Caco-2 (cell line): ENCODE measurements at regions of chr6 and their contacts with region 1.

Region 1: DNA sequence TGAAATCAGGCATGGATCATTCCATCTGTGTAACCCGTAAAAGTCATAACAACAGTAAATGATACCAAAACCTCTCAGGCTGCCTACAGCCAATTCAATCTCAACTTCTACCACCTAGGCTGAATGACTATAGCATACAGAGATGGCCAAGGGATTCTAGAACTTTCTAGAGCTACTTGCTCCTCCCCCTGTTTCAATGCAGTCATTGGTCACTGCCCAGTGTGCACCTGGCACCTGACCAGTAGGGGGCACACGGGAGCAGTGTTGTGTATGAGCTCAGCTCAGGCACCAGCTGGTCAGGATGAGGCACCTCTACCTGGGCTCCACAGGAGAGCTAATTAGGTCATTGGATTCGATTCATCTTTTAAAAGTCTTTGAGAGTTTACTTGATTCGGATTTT is 86.2 kb downstream of the PLEKHG1 start:
- DNase-seq: peak; percentile 77 to 85
- H3K4me3 ChIP-seq: no peak overlapping the region
- H3K4me3 Mint-ChIP-seq: peak overlapping the region; percentile 75
- H3K27ac Mint-ChIP-seq: peak overlapping the region; percentile 79
- H3K4me1 ChIP-seq: peaks cover 31% of the 10 kb centered on the region
- H3K4me1 Mint-ChIP-seq: peaks cover 20% of the 10 kb centered on the region
- H3K27me3 ChIP-seq: no peaks in the 10 kb centered on the region
- H3K27me3 Mint-ChIP-seq: no peaks in the 10 kb centered on the region
- CTCF ChIP-seq: peak; percentile 68 to 87

Region 2: DNA sequence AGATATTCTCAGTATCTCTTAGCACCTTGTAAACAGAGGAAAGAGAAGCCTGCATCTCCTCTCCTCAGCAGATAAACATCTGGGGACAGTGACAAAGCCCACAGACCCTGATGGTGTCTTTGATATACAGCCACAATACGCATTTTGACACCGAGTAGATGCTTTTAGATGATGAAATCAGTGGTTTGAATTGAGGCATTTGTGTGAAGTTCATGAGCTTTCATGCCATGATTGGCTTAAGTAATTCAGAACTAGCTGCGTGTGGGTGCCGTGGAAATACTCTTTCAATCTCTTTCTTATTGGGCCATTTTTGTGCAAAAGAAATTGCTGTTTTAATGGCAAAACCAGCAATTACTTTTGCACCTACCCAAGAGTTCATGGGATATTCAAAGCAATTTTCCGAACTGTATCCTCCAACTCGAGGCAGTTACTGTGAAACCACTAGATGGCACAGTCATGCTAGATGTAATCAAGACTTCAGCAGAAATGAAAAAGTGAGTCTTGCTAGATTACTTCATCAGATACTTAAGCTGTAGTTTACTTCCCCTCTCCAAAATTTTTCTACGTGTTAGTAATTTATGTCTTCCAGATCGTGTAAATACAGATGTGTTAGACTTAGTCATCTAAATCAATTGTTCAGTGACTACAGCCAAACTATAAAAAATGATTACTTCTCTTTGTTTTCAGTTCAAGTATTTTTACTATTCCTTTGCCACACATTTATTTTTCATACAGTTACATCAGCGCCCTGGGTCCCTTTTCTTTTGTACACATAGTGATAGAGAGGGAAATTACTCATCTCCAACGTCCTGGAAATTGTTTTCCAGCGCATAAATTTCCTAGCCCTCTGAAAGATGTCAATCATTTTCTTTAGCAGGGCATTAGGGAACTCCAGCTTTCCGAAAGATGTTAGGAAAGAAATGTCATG is 267.7 kb before region 1 on chr6:
- CTCF ChIA-PET with region 1: interaction called, 26 read pairs
- POLR2A ChIA-PET with region 1: no interaction called
- intact Hi-C with region 1: loop called (anchors 1 kb)
- DNase-seq: peak in 1 of 2 experiments; percentile 61
- H3K4me3 ChIP-seq: peak overlapping the region; percentile 55
- H3K4me3 Mint-ChIP-seq: peak overlapping the region; percentile 86
- H3K27ac Mint-ChIP-seq: peak overlapping the region; percentile 95
- H3K4me1 ChIP-seq: no peaks in the 10 kb centered on the region; the same call in 1 of the 2 replicates
- H3K4me1 Mint-ChIP-seq: peaks cover 20% of the 10 kb centered on the region
- H3K27me3 ChIP-seq: no peaks in the 10 kb centered on the region
- H3K27me3 Mint-ChIP-seq: peaks cover 2% of the 10 kb centered on the region
- CTCF ChIP-seq: peak; percentile 70 to 84

Region 3: DNA sequence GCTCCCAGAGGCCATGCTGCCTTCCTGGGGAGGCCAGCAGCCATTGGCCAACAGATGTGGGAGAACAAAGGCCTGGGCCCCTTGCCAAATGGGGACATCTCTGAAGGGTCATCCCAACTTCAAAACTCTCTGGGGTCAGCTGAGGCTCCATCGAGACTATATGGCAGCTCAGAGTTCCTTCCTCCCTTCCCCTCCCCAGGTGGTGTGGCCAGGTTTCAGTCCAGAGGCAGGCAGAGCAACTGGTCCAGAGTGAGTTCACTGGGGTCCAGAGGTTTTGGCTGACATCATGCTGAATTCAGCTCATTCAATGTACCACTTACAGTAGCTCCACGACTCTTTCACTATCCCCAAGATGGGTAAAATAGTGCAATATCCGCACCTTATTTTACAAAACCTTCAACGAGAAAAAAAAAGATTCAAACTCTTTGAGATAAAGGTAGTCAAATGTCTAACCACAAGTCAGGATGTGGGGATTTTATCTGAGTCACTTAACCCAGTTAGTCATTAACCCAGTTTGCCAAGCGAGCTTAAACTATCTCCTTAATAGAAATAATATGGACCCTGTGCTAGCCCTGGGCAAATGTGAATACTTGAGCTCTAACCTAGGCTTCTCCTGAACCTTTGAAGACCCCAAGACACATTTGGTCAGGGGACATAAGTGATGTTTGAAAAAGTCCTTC is 194.6 kb before region 1 on chr6:
- CTCF ChIA-PET with region 1: no interaction called
- POLR2A ChIA-PET with region 1: no interaction called
- intact Hi-C with region 1: no loop called
- DNase-seq: no peak
- H3K4me3 ChIP-seq: no peak overlapping the region
- H3K4me3 Mint-ChIP-seq: no peak overlapping the region
- H3K27ac Mint-ChIP-seq: no peak overlapping the region
- H3K4me1 ChIP-seq: peaks cover 22% of the 10 kb centered on the region
- H3K4me1 Mint-ChIP-seq: no peaks in the 10 kb centered on the region
- H3K27me3 ChIP-seq: no peaks in the 10 kb centered on the region
- H3K27me3 Mint-ChIP-seq: no peaks in the 10 kb centered on the region
- CTCF ChIP-seq: no peak

Region 4: GRCh38 chr6:150636808-150637207 is 49.1 kb before region 1 on chr6:
- CTCF ChIA-PET with region 1: no interaction called
- POLR2A ChIA-PET with region 1: no interaction called
- intact Hi-C with region 1: loop called (anchors 2 kb)
- DNase-seq: no peak
- H3K4me3 ChIP-seq: no peak overlapping the region
- H3K4me3 Mint-ChIP-seq: no peak overlapping the region
- H3K27ac Mint-ChIP-seq: peak overlapping the region; percentile 55
- H3K4me1 ChIP-seq: peaks cover 84% of the 10 kb centered on the region
- H3K4me1 Mint-ChIP-seq: peaks cover 73% of the 10 kb centered on the region
- H3K27me3 ChIP-seq: no peaks in the 10 kb centered on the region
- H3K27me3 Mint-ChIP-seq: no peaks in the 10 kb centered on the region
- CTCF ChIP-seq: no peak

Region 5: DNA sequence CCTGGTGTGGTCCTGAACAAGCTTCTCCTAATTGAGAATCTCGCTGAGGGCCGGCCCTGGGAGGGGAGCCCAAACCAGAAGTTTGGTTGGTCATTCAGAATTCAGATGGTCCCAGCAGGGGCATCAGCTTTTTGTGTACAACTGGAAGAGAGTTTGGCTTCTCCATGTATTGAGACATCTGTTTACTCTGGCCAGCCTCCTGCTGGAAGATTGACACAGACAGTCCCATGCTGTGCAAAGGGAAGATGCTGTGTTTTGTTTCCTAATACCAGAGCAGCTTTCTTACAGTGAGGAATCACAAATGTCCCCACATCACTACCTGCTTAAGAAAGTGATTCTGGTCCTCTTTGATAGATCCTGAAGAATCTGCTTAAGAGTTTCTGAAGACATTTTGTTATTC is 11.7 kb after region 1 on chr6:
- CTCF ChIA-PET with region 1: interaction called, 16 read pairs
- POLR2A ChIA-PET with region 1: interaction called, 10 read pairs
- intact Hi-C with region 1: no loop called
- DNase-seq: peak in 1 of 2 experiments; percentile 30
- H3K4me3 ChIP-seq: no peak overlapping the region
- H3K4me3 Mint-ChIP-seq: no peak overlapping the region
- H3K27ac Mint-ChIP-seq: no peak overlapping the region
- H3K4me1 ChIP-seq: peaks cover 41% of the 10 kb centered on the region
- H3K4me1 Mint-ChIP-seq: peaks cover 36% of the 10 kb centered on the region
- H3K27me3 ChIP-seq: no peaks in the 10 kb centered on the region
- H3K27me3 Mint-ChIP-seq: no peaks in the 10 kb centered on the region
- CTCF ChIP-seq: no peak

Region 6: DNA sequence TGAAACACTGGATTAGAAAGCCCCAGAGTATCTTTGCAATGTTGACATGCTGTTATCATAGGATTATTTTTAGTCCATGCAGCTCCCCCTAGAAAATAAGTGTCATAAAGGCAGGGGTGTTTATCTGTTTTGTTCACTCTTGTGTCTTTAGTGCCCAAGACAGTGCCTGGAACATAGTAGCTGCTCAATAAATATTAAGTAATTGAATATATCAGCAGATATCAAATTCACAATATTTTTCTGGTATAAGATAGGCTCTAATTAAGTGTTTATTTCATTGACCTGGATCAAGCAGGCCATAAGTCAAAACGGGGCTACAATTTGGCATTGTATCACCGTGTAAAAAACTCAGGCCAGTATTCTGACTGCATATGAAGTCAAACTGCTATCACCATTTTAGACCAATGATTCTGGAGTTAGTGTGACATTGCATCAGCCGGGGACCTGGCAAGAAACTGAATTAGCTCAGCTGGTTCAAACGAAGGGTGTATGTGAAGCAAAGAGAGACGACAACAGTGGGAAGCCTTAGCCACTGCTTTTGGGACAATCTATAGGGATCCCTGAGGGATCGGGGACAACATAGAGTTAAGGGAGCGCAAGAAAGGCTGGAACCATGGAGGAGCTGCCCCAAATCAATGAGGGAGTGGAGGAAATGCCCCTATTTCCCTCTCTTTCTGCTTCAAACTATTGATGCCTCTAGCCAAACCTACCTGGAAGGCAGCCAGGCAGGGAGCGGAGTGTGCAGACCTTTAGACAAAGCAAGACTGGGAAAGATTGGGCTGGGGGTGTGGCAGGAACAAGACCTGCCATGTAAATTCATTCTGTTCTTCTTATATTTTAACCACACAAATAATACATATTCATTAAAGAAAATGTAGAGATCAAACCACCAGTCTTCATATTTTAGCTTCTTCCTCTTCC is 26.0 kb after region 1 on chr6:
- CTCF ChIA-PET with region 1: no interaction called
- POLR2A ChIA-PET with region 1: no interaction called
- intact Hi-C with region 1: no loop called
- DNase-seq: no peak
- H3K4me3 ChIP-seq: no peak overlapping the region
- H3K4me3 Mint-ChIP-seq: no peak overlapping the region
- H3K27ac Mint-ChIP-seq: peak overlapping the region; percentile 26
- H3K4me1 ChIP-seq: peaks cover 37% of the 10 kb centered on the region
- H3K4me1 Mint-ChIP-seq: peaks cover 55% of the 10 kb centered on the region
- H3K27me3 ChIP-seq: no peaks in the 10 kb centered on the region
- H3K27me3 Mint-ChIP-seq: no peaks in the 10 kb centered on the region
- CTCF ChIP-seq: no peak

Region 7: DNA sequence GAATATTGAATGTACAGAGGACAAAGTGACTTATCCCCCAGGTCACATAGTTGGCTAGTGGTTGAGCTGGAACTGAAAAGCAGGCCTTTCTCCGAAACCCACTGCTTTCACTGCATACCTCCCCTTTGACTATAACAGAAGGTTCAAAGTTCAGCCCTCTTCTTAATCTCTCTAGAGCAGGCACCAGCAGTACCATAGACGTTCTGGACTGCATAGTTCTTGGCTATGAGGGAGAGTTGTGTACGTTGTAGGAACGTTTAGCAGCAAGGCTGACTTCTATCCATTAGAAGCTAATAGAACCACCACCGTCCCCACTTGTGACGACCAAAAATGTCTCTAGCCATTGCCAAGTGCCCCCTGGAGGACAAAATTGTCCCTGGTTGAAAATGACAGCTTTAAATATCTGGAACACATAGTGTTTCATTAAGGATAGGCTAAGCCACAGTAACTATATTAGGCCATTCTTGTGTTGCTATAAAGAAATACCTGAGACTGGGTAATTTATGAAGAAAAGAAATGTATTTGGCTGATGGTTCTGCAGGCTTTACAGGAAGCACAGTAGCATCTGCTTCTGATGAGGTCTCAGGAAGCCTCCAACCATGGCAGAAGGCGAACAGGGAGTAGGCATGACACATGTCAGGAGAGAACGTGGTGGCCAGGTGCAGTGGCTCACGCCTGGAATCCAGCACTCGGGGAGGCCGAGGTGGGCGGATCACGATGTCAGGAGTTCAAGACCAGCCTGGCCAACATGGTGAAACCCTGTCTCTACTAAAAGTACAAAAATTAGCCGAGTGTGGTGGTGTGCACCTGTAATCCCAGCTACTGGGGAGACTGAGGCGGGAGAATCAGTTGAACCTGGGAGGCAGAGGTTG is 56.0 kb after region 1 on chr6:
- CTCF ChIA-PET with region 1: interaction called, 33 read pairs
- POLR2A ChIA-PET with region 1: interaction called, 3 read pairs
- intact Hi-C with region 1: loop called (anchors 1 kb)
- DNase-seq: peak in 1 of 2 experiments; percentile 34
- H3K4me3 ChIP-seq: no peak overlapping the region
- H3K4me3 Mint-ChIP-seq: peak overlapping the region; percentile 37
- H3K27ac Mint-ChIP-seq: peak overlapping the region; percentile 67
- H3K4me1 ChIP-seq: peaks cover 37% of the 10 kb centered on the region
- H3K4me1 Mint-ChIP-seq: peaks cover 41% of the 10 kb centered on the region
- H3K27me3 ChIP-seq: no peaks in the 10 kb centered on the region
- H3K27me3 Mint-ChIP-seq: no peaks in the 10 kb centered on the region
- CTCF ChIP-seq: peak in 1 of 2 experiments; percentile 37

Region 8: DNA sequence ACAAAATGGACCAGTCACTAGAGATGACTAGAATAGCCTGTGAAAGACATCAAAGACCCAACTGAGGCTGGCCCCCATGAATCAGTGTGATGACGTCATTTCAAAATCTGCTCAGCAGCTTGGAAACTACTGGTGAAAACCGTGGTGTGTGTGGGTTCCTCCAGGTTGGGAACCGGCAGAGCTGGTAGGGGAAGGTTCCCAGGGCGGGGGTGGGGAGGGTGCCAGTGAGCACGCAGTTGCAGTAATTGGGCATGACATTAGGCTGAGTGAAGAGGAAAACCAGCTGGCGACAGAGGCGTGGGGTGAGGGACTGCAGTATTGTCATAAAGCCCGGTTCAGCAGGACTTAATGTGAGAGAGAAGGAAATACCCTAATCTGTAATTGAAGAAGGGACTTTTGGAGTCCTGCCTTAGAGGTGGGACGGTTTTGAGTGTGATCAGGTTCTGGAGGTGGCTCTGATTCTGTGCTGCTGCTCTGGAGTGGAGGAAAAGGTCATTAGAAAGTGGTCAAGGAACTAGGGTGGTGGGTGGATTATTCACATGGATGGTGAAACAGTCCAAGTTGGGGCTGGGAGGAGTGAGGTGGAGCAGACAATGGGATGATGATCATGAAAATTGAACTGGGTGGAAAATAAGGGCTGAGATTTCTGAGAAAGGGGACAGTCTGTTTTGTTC is 127.6 kb after region 1 on chr6:
- CTCF ChIA-PET with region 1: interaction called, 23 read pairs
- POLR2A ChIA-PET with region 1: no interaction called
- intact Hi-C with region 1: loop called (anchors 1 kb)
- DNase-seq: no peak
- H3K4me3 ChIP-seq: no peak overlapping the region
- H3K4me3 Mint-ChIP-seq: no peak overlapping the region
- H3K27ac Mint-ChIP-seq: peak overlapping the region; percentile 45
- H3K4me1 ChIP-seq: no peaks in the 10 kb centered on the region
- H3K4me1 Mint-ChIP-seq: peaks cover 22% of the 10 kb centered on the region
- H3K27me3 ChIP-seq: no peaks in the 10 kb centered on the region
- H3K27me3 Mint-ChIP-seq: no peaks in the 10 kb centered on the region
- CTCF ChIP-seq: no peak